ENCODE measurements at regions of chr9 and their contacts with region 1.

Region 1: GRCh38 chr9:34591248-34591916 is 1.9 kb upstream of the CNTFR start:
- DNase-seq: peak; percentile 83
- H3K4me3 Mint-ChIP-seq: peak overlapping the region; percentile 58
- H3K27ac Mint-ChIP-seq: no peak overlapping the region
- H3K4me1 Mint-ChIP-seq: peaks cover 22% of the 10 kb centered on the region
- H3K27me3 Mint-ChIP-seq: peaks cover 68% of the 10 kb centered on the region

Region 2: DNA sequence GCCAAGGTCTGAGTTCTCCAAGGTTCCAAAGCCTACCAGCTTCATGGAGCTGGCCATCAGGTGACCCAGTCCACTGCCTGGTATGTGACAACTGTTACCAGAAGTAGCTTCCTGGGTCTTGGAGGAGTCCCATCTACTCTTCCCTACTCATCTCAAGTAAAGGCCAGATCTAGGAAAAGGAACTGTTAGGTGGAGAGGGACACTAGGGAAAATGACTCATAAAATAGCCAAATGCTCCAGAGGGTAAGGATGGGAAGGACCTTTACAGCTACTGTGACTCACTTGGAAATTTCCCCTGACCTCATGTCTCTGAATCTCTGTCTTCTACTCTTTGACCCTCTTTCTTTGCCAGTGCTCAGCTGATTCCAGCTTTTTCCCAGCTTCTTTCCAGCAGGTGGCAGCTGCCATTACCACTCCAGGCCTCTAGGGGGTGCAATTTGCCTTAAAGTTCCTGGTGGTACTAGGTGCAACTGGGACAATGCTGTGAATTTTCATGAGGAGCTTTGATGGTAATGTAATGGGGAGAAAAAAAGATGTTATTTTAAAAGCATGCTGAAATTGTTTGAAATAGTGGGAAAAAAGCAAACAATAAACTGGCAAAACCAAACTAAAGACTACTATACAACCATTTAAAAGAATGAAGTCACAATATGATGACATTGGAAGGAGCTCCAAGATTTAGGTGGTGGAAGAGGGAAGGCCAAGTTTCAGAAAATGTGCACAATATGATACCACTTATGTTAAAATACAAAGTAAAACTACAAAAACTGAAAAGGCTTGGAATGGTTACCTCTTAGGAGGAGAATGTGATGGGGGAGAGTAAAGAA is 187.6 kb before region 1 on chr9:
- CTCF ChIA-PET with region 1: interaction called, 18 read pairs
- intact Hi-C with region 1: loop called (anchors 1 kb)
- DNase-seq: peak; percentile 79
- H3K4me3 Mint-ChIP-seq: no peak overlapping the region
- H3K27ac Mint-ChIP-seq: no peak overlapping the region
- H3K4me1 Mint-ChIP-seq: no peaks in the 10 kb centered on the region
- H3K27me3 Mint-ChIP-seq: no peaks in the 10 kb centered on the region

Region 3: DNA sequence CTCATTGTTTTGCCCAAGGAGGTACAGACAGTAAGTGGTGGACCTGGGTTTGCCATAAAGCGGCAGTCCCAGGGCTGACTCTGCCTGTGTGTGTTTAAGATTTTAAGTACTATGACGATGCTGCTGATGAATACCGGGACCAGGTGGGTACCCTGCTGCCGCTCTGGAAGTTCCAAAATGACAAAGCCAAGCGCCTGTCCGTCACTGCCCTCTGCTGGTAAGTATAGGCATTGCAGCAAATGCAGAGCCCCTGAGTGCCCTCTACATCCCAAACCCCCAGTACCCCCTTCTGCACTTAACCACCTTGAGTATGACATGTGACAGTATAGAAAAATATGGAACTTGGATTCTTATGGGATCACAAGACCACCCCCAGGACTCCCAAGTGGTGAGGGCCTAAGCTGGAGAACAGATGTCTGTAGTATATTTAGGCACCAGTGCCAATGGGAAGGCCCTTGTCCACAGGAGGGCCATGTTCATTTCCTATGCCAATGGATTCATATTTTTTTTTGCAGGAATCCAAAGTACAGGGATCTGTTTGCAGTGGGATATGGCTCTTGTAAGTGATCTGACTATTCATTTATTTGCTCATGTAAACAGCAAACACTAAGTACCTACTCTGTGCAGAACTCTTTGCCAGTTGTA is 90.6 kb before region 1 on chr9:
- CTCF ChIA-PET with region 1: interaction called, 5 read pairs
- intact Hi-C with region 1: loop called (anchors 5 kb)
- DNase-seq: peak; percentile 91
- H3K4me3 Mint-ChIP-seq: no peak overlapping the region
- H3K27ac Mint-ChIP-seq: no peak overlapping the region
- H3K4me1 Mint-ChIP-seq: peaks cover 13% of the 10 kb centered on the region
- H3K27me3 Mint-ChIP-seq: peaks cover 7% of the 10 kb centered on the region

Region 4: GRCh38 chr9:34546834-34547827 is 44.3 kb before region 1 on chr9:
- CTCF ChIA-PET with region 1: interaction called, 13 read pairs
- intact Hi-C with region 1: loop called (anchors 1 kb)
- DNase-seq: peak; percentile 77
- H3K4me3 Mint-ChIP-seq: no peak overlapping the region
- H3K27ac Mint-ChIP-seq: no peak overlapping the region
- H3K4me1 Mint-ChIP-seq: no peaks in the 10 kb centered on the region
- H3K27me3 Mint-ChIP-seq: peaks cover 10% of the 10 kb centered on the region

Region 5: DNA sequence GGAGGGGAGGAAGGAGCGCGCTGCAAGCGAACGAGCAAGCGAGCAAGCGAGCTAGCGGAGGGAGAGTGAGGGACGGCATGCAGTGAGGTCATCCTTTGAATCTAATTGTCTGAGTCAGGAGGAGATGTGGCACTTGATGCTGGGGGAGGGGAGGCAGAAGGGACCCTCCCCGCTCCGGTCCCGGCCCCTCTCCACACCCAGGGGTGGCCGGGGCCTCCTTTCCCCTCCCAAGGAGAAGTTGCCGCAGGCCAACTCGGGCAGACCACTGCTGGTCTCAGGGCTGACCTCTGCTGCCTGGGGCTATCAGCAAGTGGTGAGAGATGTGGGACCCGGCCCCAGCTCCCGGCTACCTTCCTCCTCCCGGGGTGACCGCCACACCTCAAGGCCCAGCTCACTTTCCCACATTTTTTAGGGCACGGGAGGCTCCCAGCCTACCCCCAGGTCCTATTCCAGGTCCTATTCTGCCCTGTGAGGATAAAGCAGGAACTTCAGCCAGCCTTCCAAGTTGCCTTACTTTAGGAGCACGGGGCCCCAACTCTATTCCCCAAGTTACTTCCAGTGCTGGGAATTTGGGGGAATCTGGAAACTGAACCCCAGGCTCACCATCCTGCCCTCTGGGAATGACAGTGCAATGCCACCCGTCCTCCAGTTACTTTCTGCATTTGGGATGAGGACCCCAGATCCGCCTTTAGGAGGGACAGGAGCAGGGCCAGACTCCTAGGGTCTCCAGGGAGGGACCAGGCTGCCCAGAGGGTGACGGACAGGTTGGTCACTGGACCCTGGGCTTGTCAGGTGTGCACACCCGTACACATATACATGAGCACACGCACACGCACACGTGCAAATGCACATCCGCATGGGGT is 12.9 kb before region 1 on chr9:
- CTCF ChIA-PET with region 1: interaction called, 20 read pairs
- intact Hi-C with region 1: no loop called
- DNase-seq: peak; percentile 40
- H3K4me3 Mint-ChIP-seq: no peak overlapping the region
- H3K27ac Mint-ChIP-seq: no peak overlapping the region
- H3K4me1 Mint-ChIP-seq: peaks cover 8% of the 10 kb centered on the region
- H3K27me3 Mint-ChIP-seq: peaks cover 60% of the 10 kb centered on the region

Measured in activated naive CD4-positive, alpha-beta T cell treated with anti-CD3 and anti-CD28 coated beads for 36 hours (primary cell).